IMR-90 (cell line): ENCODE measurements at regions of chr18 and their contacts with region 1.

Region 1: GRCh38 chr18:6219116-6219717 is 195.5 kb downstream of the L3MBTL4 start:
- DNase-seq: peak; percentile 73
- ATAC-seq: peak; percentile 100
- H3K4me3 ChIP-seq: no peak overlapping the region
- H3K27ac ChIP-seq: no peak overlapping the region
- H3K4me1 ChIP-seq: no peaks in the 10 kb centered on the region
- H3K27me3 ChIP-seq: no peaks in the 10 kb centered on the region
- CTCF ChIP-seq: peak; percentile 94
- POLR2A ChIP-seq: no peak
- RAD21 ChIP-seq: peak; percentile 95

Region 2: GRCh38 chr18:5600378-5601071 is 618.7 kb before region 1 on chr18:
- CTCF ChIA-PET with region 1: no interaction called
- POLR2A ChIA-PET with region 1: no interaction called
- dilution Hi-C with region 1: no loop called
- in situ Hi-C with region 1: no loop called
- intact Hi-C with region 1: loop called (anchors 5 kb)
- DNase-seq: peak; percentile 28
- ATAC-seq: peak; percentile 56
- H3K4me3 ChIP-seq: no peak overlapping the region
- H3K27ac ChIP-seq: no peak overlapping the region
- H3K4me1 ChIP-seq: no peaks in the 10 kb centered on the region
- H3K27me3 ChIP-seq: no peaks in the 10 kb centered on the region
- CTCF ChIP-seq: peak; percentile 65
- POLR2A ChIP-seq: no peak
- RAD21 ChIP-seq: peak; percentile 63

Region 3: DNA sequence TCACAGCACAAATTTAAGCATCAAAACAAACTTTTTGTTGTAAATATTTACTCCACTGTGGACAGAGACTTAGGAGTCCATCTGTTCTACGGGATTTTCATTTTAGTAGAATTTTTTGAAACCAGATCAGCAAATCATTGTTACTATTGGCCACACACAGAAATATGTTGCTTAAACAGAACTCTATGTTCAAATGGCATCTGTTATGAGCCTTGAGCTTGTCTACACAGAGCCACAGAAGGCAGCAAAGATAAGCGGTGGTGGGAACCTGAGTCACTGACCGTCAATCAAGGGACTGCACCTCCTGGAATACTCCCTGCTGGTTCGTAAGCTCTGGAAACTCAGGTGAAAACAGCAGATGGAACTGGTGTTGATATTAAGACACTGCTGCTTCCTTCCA is 480.7 kb before region 1 on chr18:
- CTCF ChIA-PET with region 1: no interaction called
- POLR2A ChIA-PET with region 1: no interaction called
- dilution Hi-C with region 1: no loop called
- in situ Hi-C with region 1: no loop called
- intact Hi-C with region 1: no loop called
- DNase-seq: no peak
- ATAC-seq: no peak
- H3K4me3 ChIP-seq: no peak overlapping the region
- H3K27ac ChIP-seq: no peak overlapping the region
- H3K4me1 ChIP-seq: no peaks in the 10 kb centered on the region
- H3K27me3 ChIP-seq: no peaks in the 10 kb centered on the region
- CTCF ChIP-seq: no peak
- POLR2A ChIP-seq: no peak
- RAD21 ChIP-seq: no peak

Region 4: DNA sequence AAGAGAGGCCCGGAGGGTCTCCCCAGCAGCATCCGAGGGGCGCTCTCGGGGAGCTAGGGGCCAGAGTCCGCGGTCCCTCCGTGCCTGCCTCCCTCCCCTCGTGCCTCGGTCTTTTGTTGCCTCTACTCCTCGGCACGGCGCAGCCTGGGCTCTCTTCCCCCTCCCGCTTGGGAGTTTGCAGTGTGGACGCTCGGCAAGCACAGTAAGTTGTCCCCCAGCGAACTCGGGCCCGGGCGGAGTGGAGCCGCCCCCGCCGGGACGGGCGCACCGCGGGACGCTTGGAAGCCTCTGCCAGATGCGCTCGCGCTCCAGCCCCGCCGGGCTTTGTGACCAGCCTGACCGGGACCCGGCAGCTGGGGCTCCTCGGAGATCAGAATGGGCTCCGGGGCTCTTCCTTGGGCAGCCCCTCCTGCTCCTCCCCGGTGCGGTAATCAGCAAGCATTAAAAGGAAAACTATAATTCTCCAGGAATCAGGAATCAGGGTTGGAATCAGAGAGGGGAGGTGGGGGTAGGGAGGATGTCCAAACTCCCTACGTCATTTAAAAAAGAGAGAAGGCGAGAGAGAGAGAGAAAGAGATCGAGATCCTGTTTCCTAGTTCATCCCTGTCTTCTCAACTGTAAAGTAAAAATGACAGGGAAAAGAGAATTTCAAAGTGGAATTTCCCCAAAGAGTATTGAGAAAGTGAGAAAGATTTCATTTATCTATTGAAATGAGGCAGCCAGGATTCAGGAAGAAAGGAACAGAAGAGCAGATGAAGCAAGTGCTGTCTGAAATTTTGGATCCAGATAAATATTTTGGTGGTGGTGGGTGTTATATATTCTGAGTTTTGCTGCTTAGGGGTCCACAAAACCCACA is 323.1 kb before region 1 on chr18:
- CTCF ChIA-PET with region 1: interaction called, 3 read pairs
- POLR2A ChIA-PET with region 1: no interaction called
- dilution Hi-C with region 1: no loop called
- in situ Hi-C with region 1: no loop called
- intact Hi-C with region 1: loop called (anchors 1 kb)
- DNase-seq: peak; percentile 74
- ATAC-seq: peak; percentile 73
- H3K4me3 ChIP-seq: peak overlapping the region; percentile 99
- H3K27ac ChIP-seq: peak overlapping the region; percentile 96
- H3K4me1 ChIP-seq: peaks cover 13% of the 10 kb centered on the region; the same call in 1 of the 2 replicates
- H3K27me3 ChIP-seq: no peaks in the 10 kb centered on the region
- CTCF ChIP-seq: no peak
- POLR2A ChIP-seq: peak; percentile 77; the same call in 1 of the 2 replicates
- RAD21 ChIP-seq: peak; percentile 16; the same call in 1 of the 2 replicates

Region 5: DNA sequence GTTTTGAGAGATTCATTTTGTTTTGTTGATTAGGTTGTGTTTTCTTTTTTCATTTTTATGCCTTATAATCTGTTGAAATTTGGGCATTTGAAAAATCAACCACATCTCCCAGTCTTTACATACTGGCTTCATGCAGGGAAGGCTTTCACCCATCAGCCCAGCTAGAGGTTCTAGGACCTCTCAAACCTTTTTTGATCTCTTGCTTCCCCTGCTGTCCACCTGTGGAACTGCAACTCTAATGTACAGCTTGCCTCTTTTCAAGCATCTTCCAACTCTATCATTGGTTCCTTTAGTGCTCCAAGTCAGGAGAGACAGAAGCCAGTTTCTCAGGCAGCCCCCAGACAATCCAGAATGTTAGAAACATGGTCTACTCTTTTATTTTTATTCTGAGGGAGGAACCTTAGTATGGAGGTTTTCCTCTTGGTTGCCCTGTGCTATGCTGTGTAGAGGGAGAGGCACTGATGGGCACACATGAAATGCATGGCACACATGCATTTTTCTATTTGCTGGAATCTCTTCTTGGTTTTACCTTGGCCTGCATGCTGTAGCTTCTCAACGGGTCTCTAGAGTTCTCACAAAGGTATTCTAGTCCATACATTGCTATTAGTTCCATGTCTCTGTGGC is 302.7 kb after region 1 on chr18:
- CTCF ChIA-PET with region 1: no interaction called
- POLR2A ChIA-PET with region 1: no interaction called
- dilution Hi-C with region 1: no loop called
- in situ Hi-C with region 1: no loop called
- intact Hi-C with region 1: loop called (anchors 10 kb)
- DNase-seq: peak; percentile 47
- ATAC-seq: peak; percentile 72
- H3K4me3 ChIP-seq: no peak overlapping the region
- H3K27ac ChIP-seq: no peak overlapping the region
- H3K4me1 ChIP-seq: no peaks in the 10 kb centered on the region
- H3K27me3 ChIP-seq: no peaks in the 10 kb centered on the region
- CTCF ChIP-seq: peak; percentile 74
- POLR2A ChIP-seq: no peak
- RAD21 ChIP-seq: peak; percentile 78

Region 6: GRCh38 chr18:7177116-7177744 is 958.0 kb after region 1 on chr18:
- CTCF ChIA-PET with region 1: no interaction called
- POLR2A ChIA-PET with region 1: no interaction called
- dilution Hi-C with region 1: no loop called
- in situ Hi-C with region 1: no loop called
- intact Hi-C with region 1: loop called (anchors 10 kb)
- DNase-seq: peak; percentile 85
- ATAC-seq: peak; percentile 100
- H3K4me3 ChIP-seq: no peak overlapping the region
- H3K27ac ChIP-seq: no peak overlapping the region
- H3K4me1 ChIP-seq: no peaks in the 10 kb centered on the region; the same call in 1 of the 2 replicates
- H3K27me3 ChIP-seq: no peaks in the 10 kb centered on the region; the same call in 1 of the 2 replicates
- CTCF ChIP-seq: peak; percentile 80
- POLR2A ChIP-seq: no peak
- RAD21 ChIP-seq: peak; percentile 91